Calu3 (cell line): ENCODE measurements at regions of chr16 and their contacts with region 1.

Region 1: DNA sequence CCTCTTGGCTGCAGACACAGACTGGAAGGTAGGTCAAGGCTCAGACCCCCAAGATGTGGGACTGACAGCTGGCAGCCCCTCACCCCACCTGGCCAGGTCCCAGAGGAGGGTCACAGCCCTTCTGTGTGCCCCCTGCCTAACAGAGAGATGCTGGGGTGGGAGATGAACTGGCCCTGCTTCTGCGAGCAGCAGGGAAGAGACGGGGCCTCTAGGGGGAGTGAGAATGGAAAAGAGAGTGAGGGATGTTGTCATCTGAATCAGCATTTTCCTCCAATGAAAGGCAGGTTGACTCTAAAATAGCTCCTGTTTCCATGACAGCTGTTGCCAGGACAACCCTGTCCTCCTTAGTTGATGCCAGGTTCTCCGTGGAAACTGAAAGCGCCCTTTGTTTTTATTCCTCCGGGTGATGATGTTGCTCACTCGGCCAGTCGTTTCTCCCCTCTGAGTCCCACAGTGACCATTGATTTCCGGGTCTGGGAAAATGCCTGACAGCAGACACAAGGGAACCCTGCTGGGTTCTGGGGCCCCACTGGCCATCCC is 4.9 kb upstream of the NDRG4 start:
- DNase-seq: peak; percentile 93
- H3K4me3 Mint-ChIP-seq: no peak overlapping the region
- H3K27ac Mint-ChIP-seq: peak overlapping the region; percentile 89
- H3K4me1 Mint-ChIP-seq: peaks cover 12% of the 10 kb centered on the region
- H3K27me3 Mint-ChIP-seq: peaks cover 45% of the 10 kb centered on the region
- CTCF ChIP-seq: peak; percentile 25

Region 2: DNA sequence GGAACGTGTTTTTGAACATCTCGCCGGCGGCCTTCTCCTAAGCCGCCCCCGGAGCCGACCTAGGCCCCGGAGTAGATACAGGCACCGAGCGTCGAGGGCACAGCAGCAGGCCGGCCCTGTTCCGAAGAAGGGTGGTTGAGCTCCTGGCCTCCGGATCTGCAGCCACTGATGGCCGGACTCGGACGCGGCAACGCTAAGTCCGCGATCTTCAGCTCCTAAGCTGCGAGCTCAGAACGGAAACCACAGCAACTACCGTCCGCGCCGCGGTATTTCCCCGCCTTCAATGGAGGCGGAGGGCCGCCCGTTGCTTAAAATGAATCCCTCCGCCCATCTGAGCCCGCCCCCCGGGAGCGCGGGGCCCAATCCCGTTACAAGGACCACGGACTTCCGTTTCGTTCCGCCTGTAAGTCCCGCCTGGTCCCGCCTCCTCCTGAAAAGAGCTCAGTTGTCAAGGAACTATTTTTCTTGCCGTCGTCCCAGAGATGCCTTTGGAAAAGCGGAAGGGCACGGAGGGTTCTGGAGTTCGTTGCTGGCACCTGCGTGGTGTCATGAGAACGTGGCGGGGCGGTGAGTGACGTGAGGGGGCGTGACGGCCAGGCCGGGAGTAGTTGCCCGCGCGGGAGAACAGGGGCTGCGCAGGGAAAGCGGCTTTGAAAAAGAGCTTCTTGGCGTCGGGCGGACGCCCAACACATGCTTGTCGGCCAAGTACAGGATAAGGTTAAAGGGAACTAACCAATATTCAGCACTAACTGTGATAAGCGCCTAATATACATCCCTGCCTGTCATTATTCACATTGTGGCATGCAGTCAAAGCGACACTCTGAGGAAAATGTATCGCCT is 365.7 kb before region 1 on chr16 and contains the start of gene CFAP20:
- CTCF ChIA-PET with region 1: no interaction called
- intact Hi-C with region 1: loop called (anchors 10 kb)
- DNase-seq: peak; percentile 99
- H3K4me3 Mint-ChIP-seq: peak within 1 kb of the TSS; percentile 68
- H3K27ac Mint-ChIP-seq: peak within 1 kb of the TSS; percentile 63
- H3K4me1 Mint-ChIP-seq: peaks cover 34% of the 10 kb centered on the region
- H3K27me3 Mint-ChIP-seq: no peaks in the 10 kb centered on the region
- CTCF ChIP-seq: no peak
- total RNA-seq, gene CFAP20: 54.1 and 63.8 TPM in 2 replicates

Region 3: GRCh38 chr16:58336332-58337089 is 158.5 kb before region 1 on chr16:
- CTCF ChIA-PET with region 1: interaction called, 13 read pairs
- intact Hi-C with region 1: no loop called
- DNase-seq: peak; percentile 90
- H3K4me3 Mint-ChIP-seq: no peak overlapping the region
- H3K27ac Mint-ChIP-seq: no peak overlapping the region
- H3K4me1 Mint-ChIP-seq: no peaks in the 10 kb centered on the region
- H3K27me3 Mint-ChIP-seq: peaks cover 3% of the 10 kb centered on the region
- CTCF ChIP-seq: peak; percentile 95

Region 4: GRCh38 chr16:58451945-58452401 is 43.1 kb before region 1 on chr16:
- CTCF ChIA-PET with region 1: no interaction called
- intact Hi-C with region 1: no loop called
- DNase-seq: no peak
- H3K4me3 Mint-ChIP-seq: no peak overlapping the region
- H3K27ac Mint-ChIP-seq: no peak overlapping the region
- H3K4me1 Mint-ChIP-seq: peaks cover 6% of the 10 kb centered on the region
- H3K27me3 Mint-ChIP-seq: peaks cover 96% of the 10 kb centered on the region
- CTCF ChIP-seq: no peak

Region 5: DNA sequence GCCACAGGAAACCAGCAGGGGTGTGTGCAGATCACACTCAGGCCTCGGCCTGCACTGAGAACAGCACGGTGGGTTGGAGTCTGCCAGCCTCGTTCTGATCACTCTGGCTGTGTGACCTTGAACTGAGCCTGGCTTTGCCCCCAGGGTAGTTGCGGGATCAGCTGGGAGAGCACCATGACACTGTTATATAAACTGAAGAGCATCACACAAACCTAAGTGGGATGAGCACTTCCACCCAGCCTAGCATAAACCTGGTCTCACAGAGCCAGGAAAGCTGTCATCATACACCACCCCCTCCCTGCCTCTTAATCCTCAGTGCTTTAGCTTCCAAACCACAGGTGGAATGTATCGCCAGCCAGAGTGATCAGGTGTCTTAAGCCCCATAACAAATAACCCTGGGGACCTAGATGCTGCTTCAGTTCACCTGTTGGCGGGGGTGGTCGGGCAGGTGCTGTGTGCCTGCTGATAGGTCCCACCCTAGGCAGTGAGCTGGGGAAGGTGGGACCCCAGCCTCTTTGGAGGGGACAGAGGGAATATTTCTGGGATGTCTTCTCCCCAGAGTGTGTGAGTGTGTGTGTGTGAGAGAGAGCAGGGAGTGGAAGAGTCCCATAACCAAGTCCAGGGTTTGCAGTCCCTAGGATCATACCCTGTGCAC is 23.6 kb before region 1 on chr16:
- CTCF ChIA-PET with region 1: no interaction called
- intact Hi-C with region 1: no loop called
- DNase-seq: no peak
- H3K4me3 Mint-ChIP-seq: no peak overlapping the region
- H3K27ac Mint-ChIP-seq: no peak overlapping the region
- H3K4me1 Mint-ChIP-seq: no peaks in the 10 kb centered on the region
- H3K27me3 Mint-ChIP-seq: peaks cover 100% of the 10 kb centered on the region
- CTCF ChIP-seq: no peak

Region 6: GRCh38 chr16:58644805-58645484 is 149.9 kb after region 1 on chr16:
- CTCF ChIA-PET with region 1: interaction called, 4 read pairs
- intact Hi-C with region 1: loop called (anchors 5 kb)
- DNase-seq: peak; percentile 43
- H3K4me3 Mint-ChIP-seq: no peak overlapping the region
- H3K27ac Mint-ChIP-seq: no peak overlapping the region
- H3K4me1 Mint-ChIP-seq: no peaks in the 10 kb centered on the region
- H3K27me3 Mint-ChIP-seq: no peaks in the 10 kb centered on the region
- CTCF ChIP-seq: no peak

Region 7: DNA sequence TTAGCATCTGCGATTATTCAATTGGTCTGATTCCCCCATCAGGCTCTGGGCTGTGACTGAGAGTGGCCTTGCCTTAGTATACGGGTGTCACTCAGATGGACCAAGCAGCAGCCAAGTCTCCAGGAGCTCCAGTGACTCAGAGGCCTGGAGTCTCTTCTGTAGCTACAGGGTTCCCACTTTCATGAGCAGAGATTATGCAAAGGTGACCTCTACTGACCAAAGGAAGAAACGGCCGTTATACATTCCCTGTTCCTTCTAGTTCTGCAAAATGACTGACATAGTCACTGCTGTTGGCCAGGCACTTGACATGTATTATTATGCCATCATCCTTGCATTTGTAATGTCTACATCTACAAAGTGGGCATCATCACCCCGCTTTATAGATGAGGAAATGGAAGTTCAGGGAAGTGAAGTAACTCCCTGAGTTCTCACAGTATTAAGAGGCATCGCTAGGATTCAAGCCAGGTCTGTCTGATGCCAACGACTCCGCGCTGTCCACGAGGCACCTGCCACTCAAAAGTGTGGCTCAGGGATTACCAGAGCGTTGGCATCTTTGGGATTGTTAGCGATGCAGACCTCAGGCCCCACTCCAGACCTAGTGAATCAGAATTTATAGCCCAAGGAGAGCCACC is 166.3 kb after region 1 on chr16:
- CTCF ChIA-PET with region 1: interaction called, 7 read pairs
- intact Hi-C with region 1: loop called (anchors 1 kb)
- DNase-seq: peak; percentile 66
- H3K4me3 Mint-ChIP-seq: no peak overlapping the region
- H3K27ac Mint-ChIP-seq: no peak overlapping the region
- H3K4me1 Mint-ChIP-seq: no peaks in the 10 kb centered on the region
- H3K27me3 Mint-ChIP-seq: peaks cover 14% of the 10 kb centered on the region
- CTCF ChIP-seq: peak; percentile 59